CD8-positive, alpha-beta T cell (primary cell): ENCODE measurements at regions of chr5 and their contacts with region 1.

Region 1: GRCh38 chr5:66144074-66144833 is at the start of gene SREK1:
- DNase-seq: peak; percentile 74 to 94 (median 87)
- ATAC-seq: peak; percentile 84
- H3K4me3 ChIP-seq: peak within 1 kb of the TSS; percentile 94 to 98
- H3K4me3 Mint-ChIP-seq: peak within 1 kb of the TSS; percentile 99
- H3K27ac ChIP-seq: peak within 1 kb of the TSS; percentile 94 to 99
- H3K27ac Mint-ChIP-seq: peak within 1 kb of the TSS; percentile 100
- H3K4me1 ChIP-seq: peaks cover 43% of the 10 kb centered on the region
- H3K4me1 Mint-ChIP-seq: peaks cover 46% of the 10 kb centered on the region
- H3K27me3 ChIP-seq: no peaks in the 10 kb centered on the region
- H3K27me3 Mint-ChIP-seq: no peaks in the 10 kb centered on the region
- CTCF ChIP-seq: no peak
- total RNA-seq, gene SREK1: 152 to 154 TPM

Region 2: GRCh38 chr5:65562731-65563701 is 581.2 kb before region 1 on chr5 and contains the starts of genes CENPK and PPWD1:
- CTCF ChIA-PET with region 1: no interaction called
- POLR2A ChIA-PET with region 1: interaction called, 5 read pairs
- intact Hi-C with region 1: loop called (anchors 1 to 2 kb)
- DNase-seq: peak; percentile 83 to 98 (median 95)
- ATAC-seq: peak; percentile 97
- H3K4me3 ChIP-seq: peak within 1 kb of the TSS; percentile 74 to 82
- H3K4me3 Mint-ChIP-seq: peak within 1 kb of the TSS; percentile 100
- H3K27ac ChIP-seq: peak within 1 kb of the TSS; percentile 97 to 98
- H3K27ac Mint-ChIP-seq: peak within 1 kb of the TSS; percentile 100
- H3K4me1 ChIP-seq: peaks cover 37% of the 10 kb centered on the region
- H3K4me1 Mint-ChIP-seq: peaks cover 42% of the 10 kb centered on the region
- H3K27me3 ChIP-seq: no peaks in the 10 kb centered on the region
- H3K27me3 Mint-ChIP-seq: no peaks in the 10 kb centered on the region
- CTCF ChIP-seq: no peak
- total RNA-seq, gene CENPK: 5.1 to 5.3 TPM
- total RNA-seq, gene PPWD1: 78.8 to 81.5 TPM

Region 3: GRCh38 chr5:65721720-65722574 is 422.3 kb before region 1 on chr5 and contains the starts of genes NLN and SGTB:
- CTCF ChIA-PET with region 1: no interaction called
- POLR2A ChIA-PET with region 1: interaction called, 4 read pairs
- intact Hi-C with region 1: loop called (anchors 1 to 2 kb)
- DNase-seq: peak; percentile 72 to 90 (median 84)
- ATAC-seq: peak; percentile 91
- H3K4me3 ChIP-seq: peak within 1 kb of the TSS; percentile 82 to 86
- H3K4me3 Mint-ChIP-seq: peak within 1 kb of the TSS; percentile 89
- H3K27ac ChIP-seq: peak within 1 kb of the TSS; percentile 78 to 86
- H3K27ac Mint-ChIP-seq: peak within 1 kb of the TSS; percentile 94
- H3K4me1 ChIP-seq: peaks cover 44% of the 10 kb centered on the region
- H3K4me1 Mint-ChIP-seq: peaks cover 25% of the 10 kb centered on the region
- H3K27me3 ChIP-seq: no peaks in the 10 kb centered on the region
- H3K27me3 Mint-ChIP-seq: no peaks in the 10 kb centered on the region
- CTCF ChIP-seq: no peak
- total RNA-seq, gene NLN: 1.4 to 1.5 TPM
- total RNA-seq, gene SGTB: 77.9 to 79.5 TPM

Region 4: GRCh38 chr5:65925601-65926275 is 218.5 kb before region 1 on chr5:
- CTCF ChIA-PET with region 1: no interaction called
- POLR2A ChIA-PET with region 1: interaction called, 23 read pairs
- intact Hi-C with region 1: loop called (anchors 1 kb)
- DNase-seq: peak in 8 of 9 experiments; percentile 57 to 94 (median 79)
- ATAC-seq: peak; percentile 67
- H3K4me3 ChIP-seq: peak overlapping the region; percentile 67 to 84
- H3K4me3 Mint-ChIP-seq: peak overlapping the region; percentile 91
- H3K27ac ChIP-seq: peak overlapping the region; percentile 84 to 93
- H3K27ac Mint-ChIP-seq: peak overlapping the region; percentile 95
- H3K4me1 ChIP-seq: peaks cover 26% of the 10 kb centered on the region
- H3K4me1 Mint-ChIP-seq: peaks cover 42% of the 10 kb centered on the region
- H3K27me3 ChIP-seq: no peaks in the 10 kb centered on the region
- H3K27me3 Mint-ChIP-seq: no peaks in the 10 kb centered on the region
- CTCF ChIP-seq: no peak

Region 5: DNA sequence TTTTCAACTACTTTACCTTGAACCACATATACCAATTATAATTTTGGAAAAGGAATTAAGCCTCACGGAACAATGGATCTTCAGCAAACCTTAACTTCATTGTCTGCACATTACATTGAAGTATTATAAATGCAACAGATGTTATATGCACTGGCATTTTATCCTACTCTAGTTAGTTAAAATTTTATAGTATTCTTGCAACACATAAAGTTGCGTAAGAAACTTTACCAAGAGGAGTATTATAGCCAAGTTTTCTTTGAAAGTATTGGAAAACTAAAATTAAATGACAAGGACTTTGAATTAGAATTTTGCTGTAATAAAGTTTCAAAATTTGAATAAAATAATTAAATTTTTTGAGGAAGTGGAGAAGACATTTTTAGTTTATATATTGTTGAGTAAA is 63.6 kb before region 1 on chr5:
- CTCF ChIA-PET with region 1: no interaction called
- POLR2A ChIA-PET with region 1: interaction called, 3 read pairs
- intact Hi-C with region 1: loop called (anchors 5 kb)
- DNase-seq: no peak
- ATAC-seq: no peak
- H3K4me3 ChIP-seq: no peak overlapping the region
- H3K4me3 Mint-ChIP-seq: no peak overlapping the region
- H3K27ac ChIP-seq: no peak overlapping the region
- H3K27ac Mint-ChIP-seq: no peak overlapping the region
- H3K4me1 ChIP-seq: no peaks in the 10 kb centered on the region
- H3K4me1 Mint-ChIP-seq: peaks cover 12% of the 10 kb centered on the region
- H3K27me3 ChIP-seq: no peaks in the 10 kb centered on the region
- H3K27me3 Mint-ChIP-seq: no peaks in the 10 kb centered on the region
- CTCF ChIP-seq: no peak

Region 6: DNA sequence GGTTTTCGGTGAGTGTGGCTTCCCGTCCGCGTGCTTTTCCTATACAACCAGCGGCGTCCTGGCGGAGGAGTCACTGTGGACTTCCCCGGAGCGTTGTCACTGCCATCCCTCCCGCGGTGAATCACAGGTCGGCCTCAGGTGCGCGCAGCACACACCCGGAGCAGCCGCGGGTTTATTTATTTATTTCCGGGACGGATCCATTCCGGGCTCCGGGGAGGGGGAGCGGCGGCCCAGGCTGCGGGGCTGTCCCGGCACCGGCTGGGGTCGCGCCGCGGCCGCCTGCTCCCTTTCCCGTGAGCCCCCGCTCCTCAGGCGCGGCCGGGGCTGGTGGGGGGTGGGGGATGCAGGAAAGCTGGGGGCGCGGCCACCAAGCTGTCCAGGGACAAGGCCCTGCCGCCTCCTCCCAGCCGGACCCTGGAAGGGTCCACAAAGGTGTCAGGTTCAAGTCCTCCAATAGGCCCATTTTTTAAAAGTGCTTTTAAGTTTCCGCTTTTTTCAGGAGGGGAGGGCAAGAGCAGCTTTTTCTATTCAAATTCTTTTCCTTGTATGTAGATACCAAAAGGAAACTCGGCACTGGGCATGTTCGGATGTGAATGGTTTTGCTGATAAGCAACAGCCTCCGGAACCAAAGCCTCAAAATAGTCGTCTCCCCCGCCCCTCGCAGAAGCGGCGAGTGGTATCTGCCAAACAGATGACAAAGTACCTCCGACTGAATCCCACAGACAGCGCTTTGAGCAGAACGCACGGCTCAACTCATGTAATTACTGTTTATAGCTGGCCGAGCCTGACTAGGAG is 859.9 kb after region 1 on chr5:
- CTCF ChIA-PET with region 1: no interaction called
- POLR2A ChIA-PET with region 1: no interaction called
- intact Hi-C with region 1: loop called in 1 of 2 experiments (anchors 10 kb)
- DNase-seq: peak; percentile 70 to 93 (median 87)
- ATAC-seq: peak; percentile 78
- H3K4me3 ChIP-seq: peak overlapping the region; percentile 75 to 85
- H3K4me3 Mint-ChIP-seq: peak overlapping the region; percentile 95
- H3K27ac ChIP-seq: peak overlapping the region; percentile 59 to 75
- H3K27ac Mint-ChIP-seq: peak overlapping the region; percentile 98
- H3K4me1 ChIP-seq: peaks cover 36% of the 10 kb centered on the region
- H3K4me1 Mint-ChIP-seq: peaks cover 52% of the 10 kb centered on the region
- H3K27me3 ChIP-seq: no peaks in the 10 kb centered on the region
- H3K27me3 Mint-ChIP-seq: no peaks in the 10 kb centered on the region
- CTCF ChIP-seq: no peak